Heart right ventricle (tissue), 16 donors: ENCODE measurements at regions of chr2 and their contacts with region 1.

Region 1: DNA sequence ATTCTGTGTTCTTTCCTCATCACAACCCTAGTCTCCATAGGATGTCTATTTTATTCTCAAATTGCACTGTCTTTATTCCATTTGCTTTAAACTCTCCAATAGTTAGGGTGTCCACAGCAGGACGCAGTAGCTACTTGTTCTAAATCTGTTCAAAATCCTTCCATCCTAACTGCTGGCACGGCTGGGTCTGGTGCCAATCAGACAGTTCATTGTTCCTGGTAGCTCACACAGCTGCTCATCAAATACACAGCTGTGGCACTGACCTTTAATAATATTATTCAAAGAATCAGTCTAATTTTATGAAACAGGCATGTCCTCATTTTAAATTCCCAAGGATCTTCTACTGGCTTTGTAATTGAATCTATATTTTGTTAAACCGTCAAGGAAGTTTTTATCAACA is 59.7 kb upstream of the TMEFF2 start:
- DNase-seq: no peak
- ATAC-seq: no peak
- H3K4me3 ChIP-seq: no peak overlapping the region
- H3K27ac ChIP-seq: no peak overlapping the region
- H3K4me1 ChIP-seq: peaks cover 0 to 3% (median 0%) of the 10 kb centered on the region in 9 donors
- H3K27me3 ChIP-seq: no peaks in the 10 kb centered on the region
- CTCF ChIP-seq: no peak

Region 2: DNA sequence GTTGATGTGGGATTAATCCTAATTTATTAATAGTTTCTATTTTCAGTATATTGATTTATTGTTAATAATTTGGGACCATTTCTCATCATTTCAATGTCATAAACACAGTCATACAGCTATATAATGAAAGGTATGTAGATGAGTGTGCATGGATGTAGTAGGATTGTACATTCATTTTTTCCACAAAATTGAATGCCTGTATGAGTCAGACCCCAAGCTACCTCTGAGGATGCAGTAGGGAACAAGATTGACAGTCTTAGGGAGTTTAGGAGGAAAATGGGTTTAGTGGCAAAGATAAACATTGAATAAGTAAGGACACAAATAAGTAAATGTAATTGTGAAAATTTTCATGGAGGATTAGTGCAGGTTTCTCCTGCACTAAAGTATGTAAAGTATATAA is 45.6 kb before region 1 on chr2:
- intact Hi-C with region 1: loop called in 1 of 10 experiments (anchors 1 kb)
- DNase-seq: no peak
- ATAC-seq: no peak
- H3K4me3 ChIP-seq: no peak overlapping the region
- H3K27ac ChIP-seq: no peak overlapping the region
- H3K4me1 ChIP-seq: no peaks in the 10 kb centered on the region
- H3K27me3 ChIP-seq: no peaks in the 10 kb centered on the region
- CTCF ChIP-seq: no peak